Activated naive CD4-positive, alpha-beta T cell treated with anti-CD3 and anti-CD28 coated beads for 36 hours (primary cell): ENCODE measurements at regions of chr18 and their contacts with region 1.

Region 1: GRCh38 chr18:9136315-9137155 is at the start of gene ANKRD12:
- DNase-seq: peak; percentile 96
- H3K4me3 Mint-ChIP-seq: peak within 1 kb of the TSS; percentile 96
- H3K27ac Mint-ChIP-seq: peak within 1 kb of the TSS; percentile 97
- H3K4me1 Mint-ChIP-seq: peaks cover 63% of the 10 kb centered on the region
- H3K27me3 Mint-ChIP-seq: no peaks in the 10 kb centered on the region
- total RNA-seq, gene ANKRD12: 37.5 to 40.0 TPM

Region 2: DNA sequence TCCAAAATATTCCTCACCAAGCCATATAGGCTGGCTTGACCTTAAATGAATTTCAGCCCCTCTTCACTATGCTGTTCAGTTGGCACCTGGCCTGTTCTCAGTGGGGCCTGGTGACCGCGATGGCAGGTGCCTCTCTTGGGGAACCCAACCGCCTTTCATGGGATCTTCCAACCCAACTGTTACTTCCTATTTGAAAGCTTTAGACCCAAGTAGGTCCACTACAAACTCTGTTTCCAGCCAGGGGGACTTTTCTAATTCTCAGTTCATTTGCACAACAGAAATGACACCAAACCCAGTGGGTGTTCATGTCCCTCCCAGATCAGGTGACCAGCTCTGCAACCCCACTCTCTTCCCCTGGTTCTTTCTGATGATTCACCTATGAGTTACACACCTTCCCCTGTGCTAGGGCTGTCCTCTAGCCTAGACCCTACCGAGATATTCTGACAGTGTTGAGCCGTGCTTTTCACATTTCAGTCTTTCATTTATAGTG is 69.7 kb before region 1 on chr18:
- CTCF ChIA-PET with region 1: interaction called, 63 read pairs
- intact Hi-C with region 1: no loop called
- DNase-seq: no peak
- H3K4me3 Mint-ChIP-seq: no peak overlapping the region
- H3K27ac Mint-ChIP-seq: no peak overlapping the region
- H3K4me1 Mint-ChIP-seq: peaks cover 8% of the 10 kb centered on the region
- H3K27me3 Mint-ChIP-seq: peaks cover 5% of the 10 kb centered on the region

Region 3: GRCh38 chr18:9095297-9096006 is 41.1 kb before region 1 on chr18:
- CTCF ChIA-PET with region 1: interaction called, 3 read pairs
- intact Hi-C with region 1: loop called (anchors 1 kb)
- DNase-seq: peak; percentile 88
- H3K4me3 Mint-ChIP-seq: peak overlapping the region; percentile 57
- H3K27ac Mint-ChIP-seq: peak overlapping the region; percentile 96
- H3K4me1 Mint-ChIP-seq: peaks cover 63% of the 10 kb centered on the region
- H3K27me3 Mint-ChIP-seq: no peaks in the 10 kb centered on the region

Region 4: GRCh38 chr18:9109523-9109922 is 27.0 kb before region 1 on chr18:
- CTCF ChIA-PET with region 1: interaction called, 13 read pairs
- intact Hi-C with region 1: no loop called
- DNase-seq: no peak
- H3K4me3 Mint-ChIP-seq: peak overlapping the region; percentile 59
- H3K27ac Mint-ChIP-seq: peak overlapping the region; percentile 94
- H3K4me1 Mint-ChIP-seq: peaks cover 91% of the 10 kb centered on the region
- H3K27me3 Mint-ChIP-seq: no peaks in the 10 kb centered on the region

Region 5: GRCh38 chr18:9474983-9475642 is 338.6 kb after region 1 on chr18 and contains the start of gene RALBP1:
- CTCF ChIA-PET with region 1: interaction called, 3 read pairs
- intact Hi-C with region 1: loop called (anchors 1 kb)
- DNase-seq: peak; percentile 99
- H3K4me3 Mint-ChIP-seq: peak within 1 kb of the TSS; percentile 89
- H3K27ac Mint-ChIP-seq: peak within 1 kb of the TSS; percentile 90
- H3K4me1 Mint-ChIP-seq: peaks cover 26% of the 10 kb centered on the region
- H3K27me3 Mint-ChIP-seq: peaks cover 3% of the 10 kb centered on the region
- total RNA-seq, gene RALBP1: 46.9 to 51.1 TPM